ENCODE measurements at regions of chrX and their contacts with region 1.

Region 1: GRCh38 chrX:70454441-70455365 is 10.1 kb downstream of the DLG3 start:
- DNase-seq: no peak

Region 2: GRCh38 chrX:70554081-70554480 is 99.4 kb after region 1 on chrX:
- intact Hi-C with region 1: loop called (anchors 5 kb)
- DNase-seq: no peak

Region 3: GRCh38 chrX:70664726-70665125 is 210.0 kb after region 1 on chrX:
- intact Hi-C with region 1: loop called (anchors 10 kb)
- DNase-seq: no peak

Region 4: DNA sequence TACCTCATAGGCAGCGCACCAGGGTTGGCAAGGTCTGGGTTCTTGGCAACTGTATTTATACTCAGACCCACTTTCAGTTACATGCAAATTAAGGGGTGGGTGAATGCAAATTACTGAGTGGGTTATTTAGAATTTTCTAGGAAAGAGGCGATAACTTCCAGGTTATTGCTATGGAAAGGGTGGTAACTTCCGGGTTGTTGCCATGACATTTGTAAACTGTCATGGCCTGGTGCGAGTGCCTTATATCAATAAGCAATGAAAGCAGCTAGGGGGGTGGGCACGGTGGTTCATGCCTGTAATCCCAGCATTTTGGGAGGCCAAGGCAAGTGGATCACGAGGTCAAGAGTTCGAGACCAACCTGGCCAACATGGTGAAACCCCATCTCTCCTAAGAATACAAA is 533.7 kb after region 1 on chrX:
- intact Hi-C with region 1: no loop called
- DNase-seq: no peak

Measured in cardiac septum (tissue), 1 donor.